CD8-positive, alpha-beta T cell (primary cell): ENCODE measurements at regions of chr5 and their contacts with region 1.

Region 1: GRCh38 chr5:1792842-1793266 is 6.8 kb downstream of the MRPL36 start:
- DNase-seq: peak; percentile 46 to 91 (median 75)
- ATAC-seq: peak; percentile 97
- H3K4me3 ChIP-seq: peak overlapping the region; percentile 2 to 30
- H3K4me3 Mint-ChIP-seq: peak overlapping the region; percentile 78
- H3K27ac ChIP-seq: peak overlapping the region; percentile 50 to 67
- H3K27ac Mint-ChIP-seq: peak overlapping the region; percentile 92
- H3K4me1 ChIP-seq: peaks cover 60% of the 10 kb centered on the region
- H3K4me1 Mint-ChIP-seq: peaks cover 68% of the 10 kb centered on the region
- H3K27me3 ChIP-seq: no peaks in the 10 kb centered on the region
- H3K27me3 Mint-ChIP-seq: no peaks in the 10 kb centered on the region
- CTCF ChIP-seq: no peak

Region 2: GRCh38 chr5:1105350-1106265 is 687.2 kb before region 1 on chr5:
- CTCF ChIA-PET with region 1: no interaction called
- POLR2A ChIA-PET with region 1: no interaction called
- intact Hi-C with region 1: loop called (anchors 5 to 10 kb)
- DNase-seq: peak in 8 of 9 experiments; percentile 26 to 89 (median 76)
- ATAC-seq: peak; percentile 73
- H3K4me3 ChIP-seq: peak overlapping the region; percentile 41 to 79
- H3K4me3 Mint-ChIP-seq: peak overlapping the region; percentile 78
- H3K27ac ChIP-seq: peak overlapping the region; percentile 31 to 82
- H3K27ac Mint-ChIP-seq: peak overlapping the region; percentile 97
- H3K4me1 ChIP-seq: peaks cover 99% of the 10 kb centered on the region
- H3K4me1 Mint-ChIP-seq: peaks cover 79% of the 10 kb centered on the region
- H3K27me3 ChIP-seq: no peaks in the 10 kb centered on the region
- H3K27me3 Mint-ChIP-seq: no peaks in the 10 kb centered on the region
- CTCF ChIP-seq: no peak

Region 3: DNA sequence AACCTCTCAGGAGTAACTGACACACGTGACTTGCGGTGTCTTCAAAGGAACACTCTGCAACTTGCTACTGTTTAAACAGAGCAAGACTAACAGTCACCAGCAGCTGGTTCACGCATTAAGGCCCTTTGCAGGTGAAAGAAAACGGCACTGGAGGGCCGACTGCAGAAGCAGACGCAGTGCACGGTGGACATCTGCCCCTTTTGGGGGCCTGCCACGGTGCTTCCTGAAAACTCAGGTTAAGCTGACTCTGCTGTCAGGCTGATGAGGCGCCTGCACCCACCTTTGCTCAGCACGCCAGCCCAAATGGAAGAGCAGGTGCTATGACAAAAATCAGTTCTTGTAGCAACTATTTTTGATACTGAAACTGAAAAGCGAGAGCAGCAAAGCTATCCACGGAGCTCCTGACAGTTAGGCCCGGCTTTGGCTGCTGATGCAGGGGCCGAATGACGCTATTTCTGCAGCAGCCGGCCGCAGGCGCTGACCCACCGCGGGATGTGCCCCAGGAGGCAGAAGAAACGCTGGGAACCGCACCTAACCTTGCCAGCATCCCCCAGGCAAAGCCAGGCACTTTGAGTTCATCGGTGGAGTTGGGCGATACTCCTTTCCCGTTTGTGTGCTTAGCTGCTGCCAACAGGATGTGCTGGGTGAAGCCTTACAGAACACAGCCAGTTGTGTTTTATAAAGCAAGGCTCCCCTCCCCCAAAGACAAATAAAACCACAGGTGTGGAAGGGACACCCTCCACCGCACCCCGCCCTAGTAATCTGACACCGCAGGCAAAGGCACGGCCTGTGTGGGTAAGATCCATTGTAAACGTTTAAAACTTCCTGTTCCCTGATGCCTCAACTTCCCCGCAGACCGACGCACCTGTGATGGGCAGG is 476.9 kb before region 1 on chr5:
- CTCF ChIA-PET with region 1: no interaction called
- POLR2A ChIA-PET with region 1: no interaction called
- intact Hi-C with region 1: loop called in 1 of 2 experiments (anchors 5 kb)
- DNase-seq: peak in 8 of 9 experiments; percentile 34 to 83 (median 70)
- ATAC-seq: peak; percentile 65
- H3K4me3 ChIP-seq: peak overlapping the region; percentile 40 to 54
- H3K4me3 Mint-ChIP-seq: peak overlapping the region; percentile 82
- H3K27ac ChIP-seq: peak overlapping the region; percentile 45
- H3K27ac Mint-ChIP-seq: peak overlapping the region; percentile 94
- H3K4me1 ChIP-seq: peaks cover 58% of the 10 kb centered on the region
- H3K4me1 Mint-ChIP-seq: peaks cover 61% of the 10 kb centered on the region
- H3K27me3 ChIP-seq: no peaks in the 10 kb centered on the region
- H3K27me3 Mint-ChIP-seq: no peaks in the 10 kb centered on the region
- CTCF ChIP-seq: no peak

Region 4: GRCh38 chr5:1772634-1773033 is 20.2 kb before region 1 on chr5:
- CTCF ChIA-PET with region 1: interaction called, 7 read pairs
- POLR2A ChIA-PET with region 1: no interaction called
- intact Hi-C with region 1: loop called in 1 of 2 experiments (anchors 2 kb)
- DNase-seq: peak in 4 of 9 experiments; percentile 26 to 54 (median 36)
- ATAC-seq: peak; percentile 49
- H3K4me3 ChIP-seq: no peak overlapping the region
- H3K4me3 Mint-ChIP-seq: no peak overlapping the region
- H3K27ac ChIP-seq: no peak overlapping the region
- H3K27ac Mint-ChIP-seq: no peak overlapping the region
- H3K4me1 ChIP-seq: peaks cover 3% of the 10 kb centered on the region
- H3K4me1 Mint-ChIP-seq: peaks cover 4% of the 10 kb centered on the region
- H3K27me3 ChIP-seq: no peaks in the 10 kb centered on the region
- H3K27me3 Mint-ChIP-seq: no peaks in the 10 kb centered on the region
- CTCF ChIP-seq: no peak